Activated B cell treated with CpG ODN at 0.5 μM for 24 hours (primary cell): ENCODE measurements at regions of chr1 and their contacts with region 1.

Region 1: DNA sequence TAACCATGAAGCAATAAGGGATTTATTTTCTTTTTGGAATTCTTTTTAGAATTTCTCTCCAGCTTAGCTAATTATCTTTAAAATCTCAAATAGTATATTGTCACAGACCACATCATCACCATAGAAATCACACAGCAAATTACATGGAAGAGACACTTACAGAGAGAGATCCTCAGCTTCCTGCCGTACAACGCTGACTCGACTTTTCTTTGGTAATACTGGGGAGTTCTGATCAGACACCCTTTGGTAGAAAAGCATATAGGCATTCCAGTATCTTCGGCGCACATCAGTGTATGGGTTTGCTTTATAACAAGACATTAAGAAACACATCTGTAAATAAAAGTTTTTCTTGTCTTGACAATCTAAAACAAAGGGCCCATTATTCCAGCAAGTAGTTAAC is 55.7 kb downstream of the PCSK9 start:
- DNase-seq: no peak
- ATAC-seq: no peak
- H3K4me3 Mint-ChIP-seq: no peak overlapping the region
- H3K27ac Mint-ChIP-seq: no peak overlapping the region
- H3K4me1 Mint-ChIP-seq: no peaks in the 10 kb centered on the region
- H3K27me3 Mint-ChIP-seq: no peaks in the 10 kb centered on the region
- CTCF ChIP-seq: no peak

Region 2: DNA sequence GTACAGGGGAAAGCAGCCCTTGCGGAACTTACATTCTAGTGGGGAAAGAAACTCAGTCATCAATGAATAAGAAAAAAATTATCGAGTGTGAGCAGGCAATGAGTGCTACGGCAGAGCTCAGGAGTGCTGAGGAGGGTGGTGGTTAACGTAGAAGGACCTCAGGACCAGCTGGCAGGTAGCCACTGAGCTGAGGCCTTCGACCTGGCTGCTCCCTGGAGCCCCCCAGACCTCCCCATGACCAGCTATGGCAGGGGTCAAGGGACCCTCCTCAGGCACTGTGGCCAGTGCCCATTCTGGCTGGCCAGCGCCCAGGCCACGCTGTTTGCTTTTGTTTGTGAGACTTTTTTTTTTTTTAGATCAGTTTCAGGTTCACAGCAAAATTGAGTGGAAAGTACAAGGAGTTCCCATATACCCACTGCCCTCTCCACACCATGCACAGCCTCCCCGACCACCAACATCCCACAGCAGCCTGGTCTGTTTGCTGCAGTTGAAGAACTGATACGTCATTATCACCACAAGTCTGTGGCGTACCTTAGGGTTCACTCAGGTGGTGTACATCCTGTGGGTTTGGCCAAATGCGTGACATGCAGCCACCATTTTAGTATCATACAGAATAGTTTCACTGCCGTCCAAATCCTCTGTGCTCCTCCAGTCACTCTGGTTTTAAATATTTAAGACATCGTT is 282.2 kb before region 1 on chr1:
- CTCF ChIA-PET with region 1: no interaction called
- POLR2A ChIA-PET with region 1: no interaction called
- intact Hi-C with region 1: no loop called
- DNase-seq: no peak
- ATAC-seq: no peak
- H3K4me3 Mint-ChIP-seq: no peak overlapping the region
- H3K27ac Mint-ChIP-seq: no peak overlapping the region
- H3K4me1 Mint-ChIP-seq: no peaks in the 10 kb centered on the region
- H3K27me3 Mint-ChIP-seq: peaks cover 2% of the 10 kb centered on the region
- CTCF ChIP-seq: no peak

Region 3: DNA sequence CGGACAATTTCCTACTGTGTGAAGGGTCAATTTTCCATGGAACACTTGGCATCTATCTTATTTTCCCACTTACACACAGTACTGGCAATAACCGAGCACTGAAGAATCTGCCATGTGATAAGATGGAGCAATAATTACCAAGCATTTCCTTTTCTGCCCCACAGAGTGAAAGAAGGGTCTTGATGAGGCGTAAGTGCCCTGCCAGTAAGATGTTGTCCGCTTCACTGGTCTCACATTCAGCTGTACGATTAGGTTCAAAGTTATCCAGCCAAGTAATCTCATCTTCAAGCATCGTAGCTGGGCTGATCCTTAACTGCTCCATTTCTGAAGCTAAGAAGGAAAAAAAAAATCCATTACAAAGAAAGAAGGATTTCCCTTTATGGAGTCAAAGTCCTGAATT is 12.0 kb after region 1 on chr1:
- CTCF ChIA-PET with region 1: no interaction called
- POLR2A ChIA-PET with region 1: no interaction called
- intact Hi-C with region 1: loop called (anchors 2 kb)
- DNase-seq: no peak
- ATAC-seq: no peak
- H3K4me3 Mint-ChIP-seq: no peak overlapping the region
- H3K27ac Mint-ChIP-seq: no peak overlapping the region
- H3K4me1 Mint-ChIP-seq: no peaks in the 10 kb centered on the region
- H3K27me3 Mint-ChIP-seq: no peaks in the 10 kb centered on the region
- CTCF ChIP-seq: no peak

Region 4: DNA sequence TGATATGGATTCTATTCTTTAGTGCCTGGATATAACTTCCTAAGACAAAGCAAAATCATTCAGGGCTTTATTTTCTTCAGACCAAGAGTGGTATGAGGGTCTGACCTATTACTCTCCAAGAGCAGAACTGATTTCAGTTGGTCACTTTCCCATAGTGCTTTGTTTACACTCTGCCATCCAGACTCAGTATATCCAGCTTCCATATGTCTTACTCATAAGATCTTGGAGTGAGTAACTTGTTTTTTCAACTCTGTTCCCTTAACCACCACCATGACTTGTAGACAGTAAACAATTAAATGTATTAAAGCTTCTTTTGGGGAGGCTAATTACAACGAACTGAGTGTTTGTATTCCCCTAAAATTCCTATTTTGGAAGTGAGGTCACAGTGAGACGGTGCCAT is 36.7 kb after region 1 on chr1:
- CTCF ChIA-PET with region 1: no interaction called
- POLR2A ChIA-PET with region 1: no interaction called
- intact Hi-C with region 1: loop called (anchors 5 kb)
- DNase-seq: no peak
- ATAC-seq: no peak
- H3K4me3 Mint-ChIP-seq: no peak overlapping the region
- H3K27ac Mint-ChIP-seq: no peak overlapping the region
- H3K4me1 Mint-ChIP-seq: peaks cover 10% of the 10 kb centered on the region
- H3K27me3 Mint-ChIP-seq: no peaks in the 10 kb centered on the region
- CTCF ChIP-seq: no peak